ENCODE measurements at regions of chr16 and their contacts with region 1.

Region 1: DNA sequence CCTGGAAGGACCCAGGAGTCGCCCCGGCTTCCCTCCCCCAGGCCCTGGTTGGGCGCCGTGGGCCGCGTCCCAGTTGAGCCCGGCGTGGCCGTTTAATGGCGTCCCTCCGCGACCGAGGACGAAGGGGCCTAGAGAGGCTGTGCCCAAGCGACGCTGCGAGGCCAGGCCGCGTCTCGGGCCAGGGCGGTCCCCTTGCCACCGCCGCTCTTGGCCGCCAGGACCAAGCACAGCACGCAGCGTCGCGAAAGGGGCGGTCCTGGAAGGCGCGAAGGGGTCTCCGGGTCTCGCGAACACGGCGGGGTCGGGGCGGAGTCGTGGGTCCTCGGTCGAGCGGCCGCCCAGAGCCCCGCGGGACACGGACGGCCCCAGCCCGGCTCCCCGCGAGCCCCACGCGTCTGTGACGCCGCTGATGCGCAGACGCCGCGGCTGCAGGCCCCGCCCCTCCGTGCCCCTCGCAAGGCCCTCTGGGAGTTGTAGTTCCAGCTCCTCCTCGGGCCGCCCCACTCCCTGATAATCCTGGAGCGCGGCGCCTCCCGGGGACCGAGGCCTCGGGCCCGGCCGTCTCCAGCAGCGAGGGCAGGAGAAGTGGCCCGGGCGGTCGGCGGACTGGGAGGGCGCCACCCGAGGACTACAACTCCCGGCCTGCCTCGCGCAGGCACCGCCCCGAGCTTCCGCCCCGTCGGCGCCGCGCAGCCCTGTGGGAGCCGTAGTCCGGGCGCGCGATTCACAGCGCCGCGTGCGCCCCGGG is at the start of gene CAPN15:
- DNase-seq: peak; percentile 43 to 92
- H3K4me3 ChIP-seq: peak within 1 kb of the TSS; percentile 66 to 88
- H3K27ac ChIP-seq: peak within 1 kb of the TSS; percentile 95 to 99
- H3K4me1 ChIP-seq: peaks cover 14 to 34% of the 10 kb centered on the region in 2 donors
- H3K27me3 ChIP-seq: no peaks in the 10 kb centered on the region
- CTCF ChIP-seq: peak; percentile 18 to 55 (median 29)
- total RNA-seq, gene CAPN15: 249 TPM

Region 2: DNA sequence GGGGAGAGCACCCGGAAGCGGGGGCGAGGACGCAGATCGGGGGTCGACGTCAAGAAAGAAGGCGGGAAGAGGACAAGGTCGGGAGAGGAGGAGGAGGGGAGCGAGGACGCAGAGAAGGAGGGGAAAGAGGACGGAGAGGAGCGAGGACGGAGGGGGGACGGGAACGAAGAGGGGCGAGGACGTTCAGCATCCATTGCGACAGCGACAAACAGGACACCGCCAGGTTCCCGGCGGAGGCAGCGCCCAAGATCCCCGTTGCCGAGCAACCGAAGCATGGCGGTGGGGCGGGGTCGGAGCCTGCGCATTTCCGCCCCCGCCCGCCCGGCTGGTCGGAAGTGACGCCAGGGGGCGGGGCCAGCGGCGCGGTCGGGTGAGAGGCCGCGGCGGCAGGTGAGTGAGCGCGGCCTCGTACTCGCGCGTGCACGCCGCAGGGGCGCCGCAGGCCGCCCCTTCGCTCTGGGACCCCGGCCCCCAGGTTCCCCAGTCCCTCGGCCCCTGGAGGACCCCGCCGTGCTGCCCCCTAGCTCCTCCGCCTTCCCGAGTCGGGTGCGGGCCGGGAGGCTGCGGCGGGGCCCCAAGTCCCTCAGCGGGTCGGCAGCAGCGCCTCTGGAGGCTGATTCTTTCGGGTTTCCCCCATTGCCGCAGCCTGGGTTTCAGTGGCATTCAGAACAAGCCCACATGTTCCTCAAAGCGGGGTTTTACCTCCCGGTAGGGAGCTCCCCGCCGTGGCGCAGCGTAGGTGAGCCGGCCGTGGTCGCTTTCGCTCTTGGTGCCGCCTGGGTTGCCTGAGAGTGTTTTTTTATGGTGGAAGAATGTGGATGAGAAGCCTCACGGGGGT is 292.5 kb before region 1 on chr16 and contains the start of gene FAM234A:
- intact Hi-C with region 1: loop called (anchors 5 kb)
- DNase-seq: peak; percentile 73 to 95
- H3K4me3 ChIP-seq: peak within 1 kb of the TSS; percentile 70 to 75
- H3K27ac ChIP-seq: peak within 1 kb of the TSS; percentile 82 to 91
- H3K4me1 ChIP-seq: peaks cover 6 to 9% of the 10 kb centered on the region in 2 donors
- H3K27me3 ChIP-seq: no peaks in the 10 kb centered on the region
- CTCF ChIP-seq: peak; percentile 33 to 49 (median 41)
- total RNA-seq, gene FAM234A: 67.7 TPM

Region 3: GRCh38 chr16:370443-370842 is 156.7 kb before region 1 on chr16 and contains the start of gene MRPL28:
- intact Hi-C with region 1: loop called (anchors 1 kb)
- DNase-seq: peak; percentile 78 to 98
- H3K4me3 ChIP-seq: peak within 1 kb of the TSS; percentile 53 to 70
- H3K27ac ChIP-seq: peak within 1 kb of the TSS; percentile 36 to 59
- H3K4me1 ChIP-seq: peaks cover 8 to 12% of the 10 kb centered on the region in 2 donors
- H3K27me3 ChIP-seq: no peaks in the 10 kb centered on the region
- CTCF ChIP-seq: no peak
- total RNA-seq, gene MRPL28: 47.8 TPM

Region 4: DNA sequence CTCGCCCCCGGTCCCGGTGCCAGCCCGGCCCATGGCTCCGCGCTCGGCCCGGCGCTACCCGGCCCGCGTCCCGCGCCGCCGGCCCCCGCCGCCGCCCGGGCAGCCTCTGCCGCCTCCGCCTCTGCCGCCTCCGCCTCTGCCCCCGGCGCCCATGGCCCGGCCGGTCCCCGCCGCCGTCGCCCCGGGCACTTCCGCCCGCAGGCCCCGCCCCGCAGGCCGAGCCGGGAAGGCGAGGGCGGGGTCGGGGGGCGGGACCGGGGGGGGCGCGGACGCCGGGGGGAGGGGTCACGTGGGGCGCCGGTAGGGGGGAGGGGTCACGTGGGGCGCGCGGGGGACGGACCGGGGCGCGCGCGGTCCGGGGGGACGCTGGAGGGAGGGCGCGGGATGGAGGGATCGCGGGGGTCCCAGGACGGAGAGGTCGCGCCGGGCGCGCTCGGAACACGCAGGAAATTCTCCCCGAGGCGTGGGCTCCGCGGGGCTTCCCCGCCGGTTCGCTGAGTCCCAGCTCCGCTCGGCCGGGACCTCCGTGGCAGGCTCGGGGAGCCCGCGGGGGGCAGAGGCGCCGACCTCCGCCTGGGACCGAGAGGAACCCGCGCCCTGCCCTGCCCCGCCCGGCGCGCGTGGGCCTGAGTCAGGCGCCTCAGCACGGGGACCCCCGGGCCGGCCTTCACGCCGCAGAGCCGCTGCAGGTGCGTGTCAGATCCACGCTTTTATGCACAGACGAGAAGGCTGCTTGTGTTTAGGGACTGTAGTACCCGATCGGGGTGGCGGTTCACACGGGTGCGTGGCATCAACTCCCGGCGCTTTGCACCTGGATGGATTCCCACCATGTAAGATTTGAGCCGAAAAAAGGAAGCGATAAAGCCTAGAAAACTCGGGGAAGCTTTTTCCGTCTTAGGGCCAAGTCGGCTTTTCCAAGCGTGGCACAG is 145.1 kb before region 1 on chr16 and contains the start of gene PGAP6:
- intact Hi-C with region 1: loop called (anchors 5 kb)
- DNase-seq: no peak
- H3K4me3 ChIP-seq: peak within 1 kb of the TSS; percentile 86 to 98
- H3K27ac ChIP-seq: peak within 1 kb of the TSS; percentile 64
- H3K4me1 ChIP-seq: peaks cover 5 to 12% of the 10 kb centered on the region in 2 donors
- H3K27me3 ChIP-seq: no peaks in the 10 kb centered on the region
- CTCF ChIP-seq: no peak
- total RNA-seq, gene PGAP6: 47.6 TPM

Region 5: GRCh38 chr16:537415-538335 is 10.5 kb after region 1 on chr16:
- intact Hi-C with region 1: no loop called
- DNase-seq: no peak
- H3K4me3 ChIP-seq: no peak overlapping the region
- H3K27ac ChIP-seq: no peak overlapping the region
- H3K4me1 ChIP-seq: no peaks in the 10 kb centered on the region
- H3K27me3 ChIP-seq: no peaks in the 10 kb centered on the region
- CTCF ChIP-seq: no peak

Region 6: GRCh38 chr16:554640-555365 is 27.6 kb after region 1 on chr16:
- intact Hi-C with region 1: no loop called
- DNase-seq: no peak
- H3K4me3 ChIP-seq: no peak overlapping the region
- H3K27ac ChIP-seq: no peak overlapping the region
- H3K4me1 ChIP-seq: peaks cover 0 to 2% of the 10 kb centered on the region in 2 donors
- H3K27me3 ChIP-seq: peaks cover 7% of the 10 kb centered on the region
- CTCF ChIP-seq: no peak

Region 7: GRCh38 chr16:569445-570254 is 42.5 kb after region 1 on chr16 and contains the start of gene PIGQ:
- intact Hi-C with region 1: loop called (anchors 2 kb)
- DNase-seq: peak in 1 of 2 donors; percentile 88
- H3K4me3 ChIP-seq: peak within 1 kb of the TSS; percentile 90 to 99
- H3K27ac ChIP-seq: peak within 1 kb of the TSS; percentile 82 to 86
- H3K4me1 ChIP-seq: peaks cover 9 to 24% of the 10 kb centered on the region in 2 donors
- H3K27me3 ChIP-seq: no peaks in the 10 kb centered on the region
- CTCF ChIP-seq: no peak
- total RNA-seq, gene PIGQ: 70.2 TPM

Region 8: GRCh38 chr16:589658-590159 is 62.5 kb after region 1 on chr16 and contains the start of gene RAB40C:
- intact Hi-C with region 1: loop called (anchors 1 kb)
- DNase-seq: peak; percentile 92 to 99
- H3K4me3 ChIP-seq: peak within 1 kb of the TSS; percentile 85 to 92
- H3K27ac ChIP-seq: peak within 1 kb of the TSS; percentile 92 to 94
- H3K4me1 ChIP-seq: peaks cover 8 to 32% of the 10 kb centered on the region in 2 donors
- H3K27me3 ChIP-seq: no peaks in the 10 kb centered on the region
- CTCF ChIP-seq: no peak
- total RNA-seq, gene RAB40C: 29.8 TPM

Region 9: DNA sequence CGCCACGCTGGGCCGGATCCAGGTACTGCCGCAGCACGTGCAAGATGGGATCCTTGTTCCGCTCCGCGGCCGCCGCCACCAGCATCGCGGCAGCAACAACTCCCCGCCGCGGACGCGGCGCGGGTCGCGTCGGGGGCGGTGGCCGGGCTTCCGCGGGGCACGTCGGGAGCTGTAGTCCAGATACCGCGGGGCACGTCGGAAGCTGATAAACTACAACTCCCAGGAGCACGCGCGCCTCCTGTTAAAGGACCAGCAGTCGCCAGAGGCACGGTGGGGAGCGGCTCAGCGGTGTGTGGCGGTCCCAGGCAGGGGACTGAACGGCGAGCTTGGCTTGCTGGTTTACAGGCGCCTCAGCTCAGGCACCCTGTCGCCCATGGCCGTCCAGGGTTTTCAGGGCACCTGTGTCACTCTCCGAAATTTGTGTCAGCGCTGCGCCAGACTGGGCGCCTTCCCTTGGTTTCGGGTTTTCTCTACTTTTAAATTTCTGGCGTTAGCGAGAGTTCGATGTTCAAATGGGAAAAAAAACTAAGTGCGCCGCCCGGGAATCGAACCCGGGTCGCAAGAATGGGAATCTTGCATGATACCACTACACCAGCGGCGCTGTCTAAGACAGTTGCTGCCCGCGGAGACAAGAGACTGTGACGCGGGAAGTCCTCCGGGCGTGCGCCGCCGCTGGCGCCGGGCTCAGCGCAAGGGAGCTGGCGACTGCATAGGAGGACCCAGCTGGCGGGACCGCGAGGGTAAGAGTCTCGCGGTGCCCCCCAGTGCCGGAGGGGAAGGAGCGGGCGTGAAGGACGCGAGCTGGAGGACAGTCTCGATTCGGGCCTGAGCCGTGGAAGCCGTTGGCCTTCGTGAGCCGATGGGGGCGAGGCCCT is 109.3 kb after region 1 on chr16 and contains the start of gene METTL26:
- intact Hi-C with region 1: loop called (anchors 2 kb)
- DNase-seq: peak; percentile 80 to 98
- H3K4me3 ChIP-seq: peak within 1 kb of the TSS; percentile 81 to 97
- H3K27ac ChIP-seq: peak within 1 kb of the TSS; percentile 94 to 99
- H3K4me1 ChIP-seq: peaks cover 6 to 18% of the 10 kb centered on the region in 2 donors
- H3K27me3 ChIP-seq: no peaks in the 10 kb centered on the region
- CTCF ChIP-seq: peak in 1 of 3 experiments; percentile 12
- total RNA-seq, gene METTL26: 523 TPM